IMR-90 (cell line): ENCODE measurements at regions of chr1 and their contacts with region 1.

Region 1: DNA sequence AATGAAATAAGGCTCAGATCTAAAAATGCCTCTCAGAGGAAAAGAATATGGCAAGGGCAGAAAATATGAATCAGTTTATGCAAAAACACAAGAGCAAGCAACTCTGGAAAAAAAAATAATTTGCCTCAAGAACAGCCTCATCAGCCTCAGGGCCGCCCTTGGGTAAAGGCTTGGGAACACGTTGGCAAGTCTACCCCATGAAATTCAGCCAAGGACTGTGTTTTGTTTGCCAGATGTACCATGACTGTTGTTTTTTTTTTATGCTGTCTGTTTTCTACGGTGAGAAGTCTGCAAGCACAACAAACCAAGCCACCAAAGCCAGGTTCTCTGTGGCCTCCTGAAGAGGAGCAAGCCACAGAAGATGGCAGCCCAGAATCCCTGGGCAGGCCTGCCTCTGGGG is 18.0 kb downstream of the HHIPL2 start:
- DNase-seq: no peak
- ATAC-seq: no peak
- H3K4me3 ChIP-seq: no peak overlapping the region
- H3K27ac ChIP-seq: no peak overlapping the region
- H3K4me1 ChIP-seq: no peaks in the 10 kb centered on the region
- H3K27me3 ChIP-seq: peaks cover 8% of the 10 kb centered on the region
- CTCF ChIP-seq: no peak
- POLR2A ChIP-seq: no peak
- RAD21 ChIP-seq: no peak

Region 2: DNA sequence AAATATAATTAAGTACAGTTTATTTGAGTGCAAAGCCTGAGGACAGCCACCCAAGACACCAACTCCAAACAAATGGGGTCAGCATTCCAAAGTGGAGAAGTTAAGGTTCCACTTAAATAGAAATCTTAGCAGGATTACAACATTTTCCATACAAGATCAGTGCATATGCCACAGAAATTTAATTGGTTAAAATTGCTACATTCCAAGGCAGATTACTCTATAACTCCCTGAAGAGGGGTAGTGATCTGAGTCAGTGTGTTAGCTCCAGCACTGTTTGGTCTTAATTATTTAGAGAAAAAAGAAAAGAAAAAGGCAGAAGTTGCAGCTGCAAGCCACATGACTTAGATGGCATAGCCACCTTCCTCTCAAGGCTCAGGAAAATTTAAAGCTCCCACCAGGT is 279.5 kb before region 1 on chr1:
- CTCF ChIA-PET with region 1: no interaction called
- POLR2A ChIA-PET with region 1: interaction called, 18 read pairs
- dilution Hi-C with region 1: no loop called
- in situ Hi-C with region 1: no loop called
- intact Hi-C with region 1: no loop called
- DNase-seq: peak; percentile 60
- ATAC-seq: peak; percentile 98
- H3K4me3 ChIP-seq: no peak overlapping the region
- H3K27ac ChIP-seq: peak overlapping the region; percentile 37; the same call in 1 of the 2 replicates
- H3K4me1 ChIP-seq: peaks cover 4% of the 10 kb centered on the region
- H3K27me3 ChIP-seq: no peaks in the 10 kb centered on the region
- CTCF ChIP-seq: no peak
- POLR2A ChIP-seq: no peak
- RAD21 ChIP-seq: no peak